ENCODE measurements at regions of chr10 and their contacts with region 1.

Region 1: DNA sequence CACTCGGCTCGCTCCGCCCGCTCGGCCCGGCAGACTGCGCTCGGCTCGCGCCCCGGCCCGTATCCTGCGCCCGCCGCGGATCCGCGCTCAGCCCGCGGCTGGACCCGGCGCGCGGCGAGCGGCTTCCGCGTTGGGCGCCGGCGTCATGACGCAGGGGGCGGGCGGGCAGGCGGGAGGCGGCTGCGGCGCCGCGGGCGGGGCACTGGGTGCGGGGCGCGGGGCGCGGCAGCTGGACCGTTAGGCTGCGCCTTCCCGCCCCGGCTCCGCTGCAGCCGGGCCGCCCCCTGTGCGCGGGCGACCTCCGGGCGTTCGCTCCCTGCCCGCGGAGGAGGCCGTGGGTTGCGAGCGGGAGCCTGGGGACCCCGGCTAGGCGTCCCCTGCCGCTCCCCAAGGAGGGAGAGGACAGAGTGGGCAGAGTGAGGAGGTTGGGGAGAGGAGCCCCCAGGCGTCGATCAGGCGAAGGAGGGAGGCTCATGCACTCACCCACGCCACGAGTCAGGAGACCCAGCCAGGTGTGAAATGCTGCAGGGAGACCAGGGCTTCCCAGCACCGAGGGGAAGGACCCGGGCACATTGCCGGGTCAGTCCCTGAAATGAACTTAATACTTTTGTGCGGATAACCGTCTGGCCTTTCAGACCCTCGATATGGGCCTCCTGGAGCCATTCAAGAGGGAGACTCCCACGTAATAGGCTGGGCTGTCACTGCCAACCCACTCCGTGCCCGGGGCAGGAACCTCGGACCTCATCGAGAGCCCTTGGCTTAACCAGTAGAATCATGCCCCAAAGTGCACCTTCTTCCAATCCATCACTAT is at the start of gene PIP4K2A:
- DNase-seq: peak; percentile 58
- H3K4me3 ChIP-seq: peak within 1 kb of the TSS; percentile 89 to 100 (median 89)
- H3K27ac ChIP-seq: peak within 1 kb of the TSS; percentile 55
- H3K4me1 ChIP-seq: peaks cover 17% of the 10 kb centered on the region
- H3K27me3 ChIP-seq: no peaks in the 10 kb centered on the region
- CTCF ChIP-seq: no peak
- POLR2A ChIP-seq: peak; percentile 74
- total RNA-seq, gene PIP4K2A: 32.6 and 35.4 TPM in 2 replicates

Region 2: GRCh38 chr10:22316285-22317120 is 398.2 kb before region 1 on chr10 and contains the start of gene COMMD3:
- CTCF ChIA-PET with region 1: no interaction called
- POLR2A ChIA-PET with region 1: no interaction called
- dilution Hi-C with region 1: no loop called
- intact Hi-C with region 1: loop called (anchors 10 kb)
- DNase-seq: peak; percentile 88
- H3K4me3 ChIP-seq: peak within 1 kb of the TSS; percentile 67 to 93 (median 83)
- H3K27ac ChIP-seq: peak within 1 kb of the TSS; percentile 69
- H3K4me1 ChIP-seq: peaks cover 17% of the 10 kb centered on the region
- H3K27me3 ChIP-seq: no peaks in the 10 kb centered on the region
- CTCF ChIP-seq: no peak
- POLR2A ChIP-seq: peak; percentile 89
- total RNA-seq, gene COMMD3: 48.9 and 49.8 TPM in 2 replicates

Region 3: GRCh38 chr10:22550732-22551131 is 164.0 kb before region 1 on chr10:
- CTCF ChIA-PET with region 1: interaction called, 3 read pairs
- POLR2A ChIA-PET with region 1: no interaction called
- dilution Hi-C with region 1: no loop called
- intact Hi-C with region 1: loop called (anchors 1 kb)
- DNase-seq: peak; percentile 44
- H3K4me3 ChIP-seq: no peak overlapping the region
- H3K27ac ChIP-seq: no peak overlapping the region
- H3K4me1 ChIP-seq: no peaks in the 10 kb centered on the region
- H3K27me3 ChIP-seq: no peaks in the 10 kb centered on the region
- CTCF ChIP-seq: peak; percentile 60 to 61
- POLR2A ChIP-seq: no peak

Region 4: GRCh38 chr10:22589851-22590514 is 124.7 kb before region 1 on chr10:
- CTCF ChIA-PET with region 1: interaction called, 3 read pairs
- POLR2A ChIA-PET with region 1: no interaction called
- dilution Hi-C with region 1: no loop called
- intact Hi-C with region 1: loop called (anchors 1 kb)
- DNase-seq: no peak
- H3K4me3 ChIP-seq: no peak overlapping the region
- H3K27ac ChIP-seq: no peak overlapping the region
- H3K4me1 ChIP-seq: no peaks in the 10 kb centered on the region
- H3K27me3 ChIP-seq: no peaks in the 10 kb centered on the region
- CTCF ChIP-seq: no peak
- POLR2A ChIP-seq: no peak

Region 5: DNA sequence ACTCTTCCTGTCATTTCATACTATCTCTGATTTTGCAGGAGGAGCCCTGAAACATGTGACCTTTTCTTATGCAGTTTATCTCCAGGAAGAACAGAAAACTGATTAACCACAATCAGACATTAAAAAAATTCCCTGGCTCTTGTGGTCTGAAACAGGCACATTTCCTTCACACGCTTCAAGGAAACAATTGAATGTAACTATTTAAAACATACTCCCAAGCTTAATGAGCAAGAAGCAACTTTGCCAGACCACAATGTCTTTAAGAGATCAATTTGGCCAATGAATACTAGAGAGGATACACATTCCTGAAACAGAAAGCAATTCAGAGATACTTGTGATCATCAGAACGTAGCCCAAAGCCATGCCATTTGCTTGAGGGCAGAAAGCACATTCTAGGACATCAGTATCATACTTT is 66.1 kb before region 1 on chr10:
- CTCF ChIA-PET with region 1: no interaction called
- POLR2A ChIA-PET with region 1: no interaction called
- dilution Hi-C with region 1: no loop called
- intact Hi-C with region 1: loop called (anchors 2 kb)
- DNase-seq: peak; percentile 63
- H3K4me3 ChIP-seq: peak overlapping the region in 1 of 3 experiments; percentile 42
- H3K27ac ChIP-seq: peak overlapping the region; percentile 66
- H3K4me1 ChIP-seq: peaks cover 34% of the 10 kb centered on the region
- H3K27me3 ChIP-seq: no peaks in the 10 kb centered on the region
- CTCF ChIP-seq: no peak
- POLR2A ChIP-seq: no peak

Region 6: DNA sequence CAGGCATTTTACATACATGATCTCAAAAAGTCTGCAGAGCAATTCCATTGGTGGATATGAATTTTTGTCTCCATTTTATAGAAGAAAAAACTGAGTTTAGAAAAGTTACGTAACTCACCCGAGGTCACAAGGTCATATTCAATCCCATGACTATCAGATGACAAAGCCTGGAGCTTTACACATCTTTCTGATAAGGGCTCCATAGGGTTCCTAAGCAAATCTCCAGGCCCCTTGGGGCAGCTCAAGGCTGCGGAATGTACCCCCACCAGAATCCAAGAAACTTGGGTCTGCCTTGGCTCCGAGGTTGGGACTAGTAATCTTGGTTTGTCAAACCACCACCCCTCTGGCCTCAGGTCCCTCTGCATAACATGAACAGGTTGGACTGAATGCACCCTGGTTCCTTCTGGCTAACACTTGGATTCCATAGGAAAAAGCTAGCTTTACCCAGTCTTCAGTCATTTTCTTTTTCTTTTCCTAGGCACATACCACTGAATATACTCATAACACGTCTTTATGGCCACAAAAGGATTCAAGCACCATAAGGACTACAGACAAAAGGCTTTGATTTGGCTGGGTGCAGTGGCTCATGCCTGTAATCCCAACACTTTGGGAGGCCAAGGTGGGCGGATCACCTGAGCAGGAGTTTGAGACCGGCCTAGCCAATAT is 55.8 kb before region 1 on chr10:
- CTCF ChIA-PET with region 1: no interaction called
- POLR2A ChIA-PET with region 1: no interaction called
- dilution Hi-C with region 1: no loop called
- intact Hi-C with region 1: no loop called
- DNase-seq: no peak
- H3K4me3 ChIP-seq: no peak overlapping the region
- H3K27ac ChIP-seq: no peak overlapping the region
- H3K4me1 ChIP-seq: no peaks in the 10 kb centered on the region
- H3K27me3 ChIP-seq: no peaks in the 10 kb centered on the region
- CTCF ChIP-seq: no peak
- POLR2A ChIP-seq: no peak

Region 7: DNA sequence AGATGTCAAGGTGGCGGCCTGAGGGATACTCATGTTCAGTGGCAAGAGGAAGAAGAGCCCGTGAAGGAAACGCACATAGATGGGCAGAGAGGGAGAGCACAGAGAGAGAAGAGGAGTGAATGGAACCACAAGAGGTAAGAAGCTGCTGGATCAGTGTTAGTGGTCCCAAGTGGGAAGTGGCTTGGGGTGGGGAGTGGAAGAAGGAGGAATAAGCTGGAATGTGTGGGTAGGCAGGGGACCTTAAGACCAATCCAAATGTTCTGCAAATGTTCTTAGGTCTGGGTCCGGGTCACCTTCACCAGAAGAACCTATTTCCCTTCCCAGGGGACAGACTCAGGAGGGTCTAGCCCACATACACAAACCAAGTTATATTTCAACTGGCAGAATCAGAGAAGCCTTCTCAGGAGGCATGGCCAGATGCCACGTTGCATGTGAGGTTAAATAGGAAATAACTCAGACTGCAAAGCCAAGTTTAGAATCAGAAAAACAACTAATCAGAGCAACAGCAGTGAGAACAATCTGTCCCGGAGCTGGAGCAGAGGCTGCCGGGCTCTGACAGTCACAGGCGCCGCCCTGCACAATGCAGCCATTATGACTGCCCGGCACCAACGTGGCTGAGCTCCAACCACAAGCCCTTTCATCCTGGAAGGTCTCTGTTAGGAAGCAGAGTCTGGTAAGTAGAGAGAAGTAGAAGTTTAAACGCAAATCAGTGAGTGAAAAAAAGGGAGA is 134.6 kb after region 1 on chr10:
- CTCF ChIA-PET with region 1: no interaction called
- POLR2A ChIA-PET with region 1: no interaction called
- dilution Hi-C with region 1: no loop called
- intact Hi-C with region 1: loop called (anchors 5 kb)
- DNase-seq: peak; percentile 85
- H3K4me3 ChIP-seq: no peak overlapping the region
- H3K27ac ChIP-seq: peak overlapping the region; percentile 24
- H3K4me1 ChIP-seq: peaks cover 11% of the 10 kb centered on the region
- H3K27me3 ChIP-seq: no peaks in the 10 kb centered on the region
- CTCF ChIP-seq: no peak
- POLR2A ChIP-seq: no peak